ENCODE measurements at regions of chr15 and their contacts with region 1.

Region 1: DNA sequence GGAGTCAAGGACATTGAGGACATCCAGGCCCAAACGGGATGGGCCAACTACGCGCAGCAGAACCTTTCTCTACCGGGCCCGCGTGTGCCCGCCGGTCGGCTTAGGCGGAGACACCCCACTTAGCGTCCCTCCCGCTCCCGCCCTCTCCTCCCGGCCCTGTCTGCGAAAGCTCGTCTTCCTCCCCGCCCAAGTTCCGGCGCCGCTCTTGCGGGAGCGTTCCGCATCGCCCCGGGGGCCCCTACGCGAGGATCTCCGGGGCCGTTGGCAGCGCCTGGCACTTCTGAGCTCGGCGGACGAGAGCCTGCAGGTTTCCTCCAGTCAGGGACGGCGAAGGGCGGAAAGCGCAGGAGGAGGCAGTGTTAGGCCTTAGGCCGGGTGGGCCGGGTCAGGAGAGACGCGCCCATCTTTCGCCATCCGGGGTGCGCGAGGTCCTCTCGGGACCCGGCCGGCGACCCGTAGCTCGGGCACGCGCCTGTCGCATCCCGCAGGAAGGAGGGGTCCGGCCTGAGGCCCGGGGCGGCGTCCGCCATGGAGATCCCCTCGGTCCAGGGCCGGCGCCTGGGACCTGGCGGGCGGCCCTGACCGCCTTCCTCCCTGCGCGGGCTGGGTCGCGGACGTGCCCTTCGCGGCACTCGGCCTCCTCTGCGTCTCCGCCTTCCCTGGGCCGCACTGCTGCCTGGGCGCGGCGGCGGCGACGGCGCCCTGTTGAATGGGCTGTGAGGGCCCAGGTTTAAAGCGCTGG is at the start of gene FEM1B:
- DNase-seq: peak; percentile 95
- ATAC-seq: peak; percentile 94
- total RNA-seq, gene FEM1B: 48.9 TPM

Region 2: GRCh38 chr15:67968564-67968963 is 309.2 kb before region 1 on chr15:
- intact Hi-C with region 1: no loop called
- DNase-seq: no peak
- ATAC-seq: no peak

Region 3: DNA sequence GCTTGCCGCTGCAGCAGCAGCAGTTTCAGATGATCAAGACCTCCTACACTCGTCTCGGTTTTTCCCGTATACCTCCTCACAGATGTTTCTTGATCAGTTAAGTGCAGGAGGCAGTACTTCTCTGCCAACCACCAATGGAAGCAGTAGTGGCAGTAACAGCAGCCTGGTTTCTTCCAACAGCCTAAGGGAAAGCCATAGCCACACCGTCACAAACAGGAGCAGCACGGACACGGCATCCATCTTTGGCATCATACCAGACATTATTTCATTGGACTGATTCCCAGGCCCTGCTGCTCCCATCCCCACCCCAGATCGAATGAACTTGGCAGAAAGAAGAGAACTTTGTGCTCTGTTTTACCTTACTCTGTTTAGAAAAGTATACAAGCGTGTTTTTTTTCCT is 90.2 kb before region 1 on chr15:
- intact Hi-C with region 1: loop called (anchors 5 kb)
- DNase-seq: no peak
- ATAC-seq: peak; percentile 94

Region 4: DNA sequence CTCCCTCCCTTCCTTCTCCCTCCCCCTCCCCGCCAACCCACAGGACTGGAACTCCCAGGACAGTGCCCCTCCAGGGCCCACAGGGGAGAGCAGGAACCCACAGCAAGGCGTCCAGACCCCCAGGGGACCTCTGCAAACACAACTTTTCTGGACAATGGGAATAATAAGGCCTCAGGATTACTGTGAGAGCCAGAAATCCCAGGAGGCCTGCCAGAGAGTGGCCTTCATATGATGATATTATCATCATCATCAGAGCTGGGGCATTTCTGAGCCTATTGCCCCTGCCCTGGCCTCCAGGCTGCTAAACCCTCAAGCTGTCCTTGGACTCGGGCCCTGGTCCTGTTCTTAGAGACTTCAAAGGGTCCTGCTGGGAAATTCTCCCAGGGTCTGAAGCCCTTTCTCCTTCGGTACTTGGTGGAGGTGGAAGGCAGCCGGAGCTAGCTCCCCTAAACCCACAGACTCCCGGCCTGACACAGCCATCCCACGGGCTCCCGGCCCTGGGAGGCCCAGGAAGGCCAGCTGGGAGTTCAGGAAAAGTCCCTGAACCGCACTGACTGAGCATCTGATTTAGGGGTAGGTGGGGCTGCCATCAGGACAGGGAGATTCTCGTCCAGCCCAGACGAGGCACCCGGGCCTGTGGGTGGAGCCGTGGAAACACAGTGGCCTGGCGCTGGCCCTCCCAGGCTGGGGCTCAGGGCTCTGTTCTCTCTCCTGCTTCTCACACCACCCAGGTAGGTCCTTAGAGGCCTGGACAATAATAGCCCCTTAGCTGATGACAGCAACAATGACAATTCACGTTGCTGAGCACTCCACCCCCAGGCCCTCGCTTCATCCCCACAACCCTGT is 77.5 kb before region 1 on chr15:
- intact Hi-C with region 1: no loop called
- DNase-seq: no peak
- ATAC-seq: no peak

Region 5: DNA sequence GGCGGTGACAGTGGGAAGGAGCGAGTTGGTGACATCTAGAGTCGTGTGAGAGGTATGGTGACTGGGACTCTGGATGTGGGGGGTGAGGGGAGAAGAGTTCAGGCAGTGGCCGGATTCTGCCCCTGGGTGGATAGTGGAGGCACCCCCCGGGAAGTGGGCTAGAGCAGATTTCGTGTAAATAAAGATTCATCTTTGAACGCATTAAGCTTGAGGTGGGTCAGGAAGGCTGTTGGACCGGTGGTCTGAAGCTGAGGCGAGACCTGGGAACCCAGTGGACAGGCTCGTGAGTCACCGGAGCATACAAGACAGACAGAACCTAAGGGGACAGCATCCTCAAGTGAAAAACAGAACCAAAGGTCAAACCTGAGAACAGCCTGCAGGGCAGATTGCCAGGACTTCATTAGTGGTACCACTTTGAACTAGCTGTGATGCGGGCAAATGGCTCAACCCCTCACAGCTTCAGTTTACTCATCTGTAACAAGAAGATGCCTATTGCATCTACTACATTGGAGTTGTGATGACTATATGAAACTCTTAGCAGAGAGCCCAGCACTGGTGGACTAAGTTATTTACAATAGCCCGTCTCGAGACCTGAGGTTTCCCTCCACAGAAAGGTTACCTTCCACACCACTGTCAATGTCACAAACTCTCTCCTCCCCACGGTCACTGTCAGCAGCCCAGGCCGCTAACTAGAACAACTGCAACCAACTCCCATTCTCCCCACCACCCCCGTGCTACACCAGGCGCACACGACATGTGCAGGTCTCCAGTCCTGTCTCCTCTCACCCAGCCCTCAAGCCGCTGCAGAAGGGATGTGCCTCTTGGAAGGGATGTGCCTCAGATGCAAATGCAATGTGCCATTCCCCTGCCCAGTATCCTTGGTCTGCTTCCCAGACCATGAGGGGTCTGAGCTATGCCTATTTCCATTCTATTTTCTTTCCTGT is 47.3 kb before region 1 on chr15:
- intact Hi-C with region 1: loop called (anchors 1 kb)
- DNase-seq: peak; percentile 58
- ATAC-seq: no peak

Region 6: DNA sequence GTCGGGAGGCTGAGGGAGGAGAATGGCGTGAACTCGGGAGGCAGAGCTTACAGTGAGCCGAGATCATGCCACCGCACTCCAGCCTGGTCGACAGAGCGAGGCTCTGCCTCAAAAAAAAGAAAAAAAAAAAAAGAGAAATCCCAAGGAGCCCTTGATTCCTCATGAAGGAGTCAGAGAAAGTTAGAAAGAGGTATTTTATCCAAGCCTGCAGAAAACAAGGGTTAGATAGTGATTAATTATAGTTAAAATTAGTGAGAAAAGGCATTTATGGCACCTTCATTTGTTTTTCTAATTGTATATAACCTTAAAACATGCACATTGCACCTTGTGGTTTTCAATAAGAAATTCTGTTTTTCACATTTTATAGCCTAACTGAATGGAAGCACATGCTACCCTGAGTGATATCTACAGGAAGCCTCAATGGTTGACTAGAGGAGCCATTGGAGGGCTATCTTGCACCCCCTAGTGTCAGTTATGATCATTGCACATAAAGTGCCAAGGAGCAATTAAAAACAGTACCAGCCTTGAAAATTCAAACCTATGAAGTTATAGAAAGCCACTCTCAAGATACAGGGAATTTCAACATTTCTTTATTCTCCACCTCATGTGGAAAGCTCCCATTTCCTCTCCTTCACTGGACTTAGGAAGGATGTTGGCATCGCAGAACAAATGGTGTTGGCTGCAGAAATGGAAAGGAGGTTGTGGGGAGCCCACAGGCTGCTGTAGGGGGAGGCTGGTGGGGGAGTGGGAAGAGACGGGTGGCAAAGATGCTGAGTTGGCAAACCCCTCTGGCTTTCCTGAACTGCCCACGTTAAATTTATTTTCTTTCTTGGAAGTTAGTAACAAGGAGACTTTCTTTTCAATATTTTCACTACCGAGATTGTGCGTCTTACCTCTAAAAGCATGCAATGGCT is 105.6 kb after region 1 on chr15:
- intact Hi-C with region 1: no loop called
- DNase-seq: no peak
- ATAC-seq: peak; percentile 69

Measured in Right ventricle myocardium inferior (tissue), 1 donor.